HAP-1 (cell line): ENCODE measurements at regions of chr9 and their contacts with region 1.

Region 1: GRCh38 chr9:128575469-128575868 is 23.1 kb downstream of the SPTAN1 start:
- DNase-seq: no peak
- H3K4me3 ChIP-seq: no peak overlapping the region
- H3K4me1 ChIP-seq: no peaks in the 10 kb centered on the region
- H3K27me3 ChIP-seq: no peaks in the 10 kb centered on the region

Region 2: GRCh38 chr9:127796225-127796813 is 779.1 kb before region 1 on chr9:
- in situ Hi-C with region 1: no loop called
- DNase-seq: no peak
- H3K4me3 ChIP-seq: no peak overlapping the region
- H3K4me1 ChIP-seq: peaks cover 14% of the 10 kb centered on the region
- H3K27me3 ChIP-seq: no peaks in the 10 kb centered on the region

Region 3: GRCh38 chr9:128617943-128618342 is 42.5 kb after region 1 on chr9:
- in situ Hi-C with region 1: loop called (anchors 5 kb)
- DNase-seq: no peak
- H3K4me3 ChIP-seq: no peak overlapping the region
- H3K4me1 ChIP-seq: no peaks in the 10 kb centered on the region
- H3K27me3 ChIP-seq: no peaks in the 10 kb centered on the region